ENCODE measurements at regions of chr2 and their contacts with region 1.

Region 1: GRCh38 chr2:157628477-157629415 is at the start of gene ACVR1C:
- DNase-seq: peak; percentile 63
- H3K4me3 Mint-ChIP-seq: peak within 1 kb of the TSS; percentile 88
- H3K27ac Mint-ChIP-seq: peak within 1 kb of the TSS; percentile 55
- H3K4me1 Mint-ChIP-seq: peaks cover 28% of the 10 kb centered on the region
- H3K27me3 Mint-ChIP-seq: peaks cover 15% of the 10 kb centered on the region
- total RNA-seq, gene ACVR1C: 0.59 and 1.1 TPM in 2 replicates

Region 2: DNA sequence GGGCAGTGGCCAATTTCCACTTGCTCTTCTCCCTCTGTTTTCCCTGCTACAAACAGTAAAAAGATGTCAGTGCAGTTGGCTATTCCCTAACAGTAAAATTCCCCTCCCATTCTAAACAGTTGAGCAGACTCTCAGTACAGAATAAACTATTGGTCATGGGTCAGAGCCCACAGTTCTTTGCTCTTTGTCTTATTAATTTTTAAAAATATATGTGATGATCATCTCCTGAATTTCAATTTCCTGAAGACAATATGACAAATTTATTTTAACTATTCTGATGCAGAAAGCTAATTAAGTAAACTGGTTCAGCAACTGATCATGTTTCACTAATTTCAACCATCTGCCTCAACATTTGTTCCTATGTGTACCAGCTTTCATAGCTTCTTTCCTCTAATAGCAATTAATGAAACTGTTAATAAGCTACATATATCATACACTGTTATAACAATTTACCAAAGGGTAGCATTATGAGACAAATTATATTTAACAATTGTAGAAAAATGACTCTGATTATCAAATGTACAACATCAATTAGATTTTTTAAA is 412.3 kb before region 1 on chr2:
- intact Hi-C with region 1: no loop called
- DNase-seq: no peak
- H3K4me3 Mint-ChIP-seq: no peak overlapping the region
- H3K27ac Mint-ChIP-seq: no peak overlapping the region
- H3K4me1 Mint-ChIP-seq: no peaks in the 10 kb centered on the region
- H3K27me3 Mint-ChIP-seq: peaks cover 8% of the 10 kb centered on the region

Region 3: GRCh38 chr2:157302492-157303099 is 326.1 kb before region 1 on chr2:
- intact Hi-C with region 1: loop called (anchors 1 kb)
- DNase-seq: peak; percentile 26
- H3K4me3 Mint-ChIP-seq: no peak overlapping the region
- H3K27ac Mint-ChIP-seq: no peak overlapping the region
- H3K4me1 Mint-ChIP-seq: peaks cover 22% of the 10 kb centered on the region
- H3K27me3 Mint-ChIP-seq: peaks cover 14% of the 10 kb centered on the region

Region 4: DNA sequence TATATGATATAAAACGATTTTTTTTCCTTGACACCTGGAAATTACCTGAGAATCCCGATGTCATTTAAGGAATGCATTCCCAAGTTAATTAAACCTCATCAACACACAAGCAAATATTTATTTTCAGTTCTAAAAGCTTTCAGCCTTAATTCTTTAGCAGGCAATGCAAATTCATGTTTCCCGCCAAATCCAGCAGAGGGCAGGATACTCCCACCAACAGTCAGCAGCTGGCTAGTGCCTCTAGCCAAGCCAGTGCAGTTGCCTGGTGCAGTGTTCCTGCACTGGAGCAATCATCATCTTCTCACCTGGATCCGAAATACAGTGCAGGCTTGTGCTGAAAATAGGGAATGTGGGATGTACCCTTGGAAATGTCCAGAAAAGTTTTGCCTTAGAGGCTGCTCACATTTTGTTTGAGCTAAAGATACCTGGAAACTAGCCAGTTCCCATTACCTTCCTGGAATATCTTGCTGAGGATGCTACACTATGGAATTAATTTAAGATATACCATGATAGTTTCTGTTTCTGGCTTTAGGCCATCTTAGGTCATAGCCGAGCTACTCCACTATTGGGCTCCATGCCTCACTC is 136.5 kb before region 1 on chr2:
- intact Hi-C with region 1: loop called (anchors 10 kb)
- DNase-seq: peak; percentile 63
- H3K4me3 Mint-ChIP-seq: no peak overlapping the region
- H3K27ac Mint-ChIP-seq: no peak overlapping the region
- H3K4me1 Mint-ChIP-seq: peaks cover 71% of the 10 kb centered on the region
- H3K27me3 Mint-ChIP-seq: no peaks in the 10 kb centered on the region

Region 5: DNA sequence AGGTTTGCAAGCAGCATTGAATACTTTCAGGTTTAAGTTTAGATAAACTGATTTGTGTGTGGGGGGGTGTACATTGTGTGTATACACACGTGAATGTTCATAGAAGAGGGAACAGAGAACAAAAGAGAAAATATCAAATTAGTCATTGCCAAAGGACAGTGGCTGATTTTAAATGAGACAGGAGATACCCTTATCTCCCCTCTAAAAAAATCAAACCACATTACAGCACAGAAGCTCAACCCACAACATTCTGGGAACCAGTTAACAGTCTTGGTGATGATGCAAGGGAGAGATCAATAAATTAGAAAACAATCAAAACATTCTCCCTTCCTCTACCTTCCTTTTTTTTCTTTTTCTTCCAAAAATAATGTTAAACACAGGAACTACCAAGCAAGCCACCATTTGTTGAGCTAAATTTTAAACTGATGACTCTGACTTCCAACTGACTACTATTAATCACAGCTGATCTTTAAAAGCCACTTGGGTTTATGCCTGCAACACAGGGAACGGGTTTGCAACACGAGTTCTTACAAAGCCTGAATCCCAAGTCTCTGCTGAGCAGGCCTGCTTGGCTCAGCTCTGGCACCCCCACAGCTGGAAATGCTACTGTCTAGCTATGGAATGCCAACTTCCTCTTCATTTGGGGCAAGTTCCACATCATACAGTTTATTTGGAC is 119.1 kb after region 1 on chr2:
- intact Hi-C with region 1: loop called (anchors 5 kb)
- DNase-seq: no peak
- H3K4me3 Mint-ChIP-seq: no peak overlapping the region
- H3K27ac Mint-ChIP-seq: peak overlapping the region; percentile 50
- H3K4me1 Mint-ChIP-seq: peaks cover 65% of the 10 kb centered on the region
- H3K27me3 Mint-ChIP-seq: no peaks in the 10 kb centered on the region

Region 6: DNA sequence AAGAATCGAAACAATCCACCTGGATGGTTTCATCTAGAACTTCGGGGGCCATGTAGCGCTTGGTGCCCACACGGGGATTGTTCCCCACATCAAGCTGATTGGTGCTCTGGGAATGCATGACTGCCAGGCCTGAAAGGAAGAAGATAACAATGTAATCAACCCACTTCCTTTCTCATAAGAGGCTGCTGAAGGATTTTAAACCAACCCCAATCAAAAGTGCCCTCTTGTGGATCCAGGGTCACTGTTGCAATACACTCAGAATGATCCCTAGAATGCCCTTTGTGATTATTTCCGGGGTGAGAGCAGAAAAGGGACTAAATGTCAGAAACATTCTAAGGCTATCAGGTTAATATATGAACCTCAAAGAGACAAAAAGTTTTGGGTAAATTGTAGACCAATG is 132.2 kb after region 1 on chr2:
- intact Hi-C with region 1: no loop called
- DNase-seq: no peak
- H3K4me3 Mint-ChIP-seq: no peak overlapping the region
- H3K27ac Mint-ChIP-seq: no peak overlapping the region
- H3K4me1 Mint-ChIP-seq: peaks cover 5% of the 10 kb centered on the region
- H3K27me3 Mint-ChIP-seq: no peaks in the 10 kb centered on the region

Region 7: DNA sequence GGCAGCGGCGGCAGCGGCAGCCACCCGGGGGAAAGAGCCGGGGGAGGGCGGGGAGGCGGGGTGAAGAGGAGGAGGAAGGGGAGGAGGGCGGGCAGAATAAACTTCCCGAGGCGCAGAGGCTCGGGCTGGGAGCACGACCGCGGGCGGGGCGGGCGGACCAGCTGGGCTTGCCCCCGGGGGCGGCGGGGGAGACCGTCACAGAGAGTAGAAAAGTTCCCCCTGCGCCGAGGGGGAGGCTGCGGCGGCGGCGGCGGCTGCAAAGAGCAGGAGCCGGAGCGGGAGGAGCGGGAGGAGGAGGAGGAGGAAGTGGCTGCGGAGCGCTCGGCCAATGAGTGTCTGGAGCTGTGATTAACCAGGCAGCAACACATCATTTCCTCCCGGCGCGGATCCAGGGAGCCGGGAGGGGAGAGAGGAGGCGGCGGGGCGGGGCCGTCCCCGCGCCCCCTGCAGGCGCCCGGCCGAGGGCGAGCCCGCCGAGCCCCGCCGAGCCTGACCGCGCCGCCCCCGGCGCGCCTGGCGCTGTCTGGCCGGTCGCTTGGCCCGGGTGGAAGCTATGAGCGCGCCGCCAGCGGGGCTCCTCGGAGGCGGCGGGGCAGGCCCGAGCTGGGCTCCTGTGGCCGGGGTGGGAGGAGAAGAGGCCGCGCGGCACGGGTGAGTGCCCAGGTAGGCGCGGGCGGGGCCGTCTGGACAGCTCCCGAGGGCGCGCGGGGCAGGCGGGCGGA is 247.5 kb after region 1 on chr2 and contains the start of gene ACVR1:
- intact Hi-C with region 1: loop called (anchors 2 kb)
- DNase-seq: peak; percentile 80
- H3K4me3 Mint-ChIP-seq: peak within 1 kb of the TSS; percentile 98
- H3K27ac Mint-ChIP-seq: peak within 1 kb of the TSS; percentile 96
- H3K4me1 Mint-ChIP-seq: peaks cover 65% of the 10 kb centered on the region
- H3K27me3 Mint-ChIP-seq: no peaks in the 10 kb centered on the region
- total RNA-seq, gene ACVR1: 44.0 and 46.5 TPM in 2 replicates

Measured in activated T-helper 1 cell treated with anti-CD3 and anti-CD28 coated beads, Interleukin-12 subunit alpha, Interleukin-12 subunit beta, Interleukin-2, Interleukin-4 antibody, amounts not matched to agents 30 ng/mL and 10 ng/mL and 1 ng/mL, durations not matched to agents 14 hours and 24 hours and 36 hours (primary cell).